MCF 10A (cell line): ENCODE measurements at regions of chrX and their contacts with region 1.

Region 1: GRCh38 chrX:131792789-131793462 is 230.2 kb upstream of the STK26 start:
- DNase-seq: peak; percentile 94
- H3K4me3 Mint-ChIP-seq: peak overlapping the region; percentile 72
- H3K27ac Mint-ChIP-seq: peak overlapping the region; percentile 80
- H3K4me1 Mint-ChIP-seq: peaks cover 4% of the 10 kb centered on the region
- H3K27me3 Mint-ChIP-seq: peaks cover 37% of the 10 kb centered on the region
- CTCF ChIP-seq: peak; percentile 49

Region 2: DNA sequence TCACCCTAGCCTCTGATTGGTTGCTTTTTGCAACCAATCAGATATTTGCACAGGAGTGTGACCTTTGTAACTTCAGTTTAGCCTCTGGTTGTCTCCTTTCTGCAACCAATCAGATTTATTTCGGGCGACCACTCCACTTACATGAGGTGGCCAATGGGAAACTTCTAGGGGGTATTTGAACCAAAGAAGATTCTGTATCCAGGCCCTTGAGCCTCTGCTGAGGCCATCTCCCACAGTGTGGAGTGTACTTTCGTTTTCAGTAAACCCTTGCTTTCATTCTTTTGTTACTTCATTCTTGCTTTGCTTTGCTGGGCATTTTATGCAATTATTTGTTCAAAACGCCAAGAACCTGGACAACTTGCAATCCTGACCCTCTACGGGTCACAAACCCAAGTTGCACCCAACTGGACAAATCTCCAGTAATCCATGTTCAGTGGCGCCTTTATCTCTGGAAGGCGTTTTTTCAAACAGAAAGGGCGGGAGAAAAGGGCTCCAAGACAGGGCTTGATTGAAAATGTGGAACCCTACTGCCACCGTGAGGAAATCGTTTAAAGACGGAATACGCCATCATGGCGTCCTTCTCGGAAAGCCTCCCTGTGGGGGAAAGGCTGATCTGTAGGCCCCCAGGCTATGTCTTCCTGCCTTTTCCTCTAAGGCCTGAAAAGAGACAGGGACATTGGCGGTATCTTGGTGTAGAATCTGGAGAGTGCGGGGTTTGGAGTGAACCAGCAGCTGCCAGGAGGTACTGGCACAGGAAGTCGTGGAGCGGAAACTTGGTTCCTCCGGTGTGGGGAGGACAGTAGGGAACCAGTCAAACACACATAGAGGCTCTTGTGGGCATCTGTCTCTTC is 64.4 kb before region 1 on chrX:
- CTCF ChIA-PET with region 1: interaction called, 3 read pairs
- POLR2A ChIA-PET with region 1: interaction called, 3 read pairs
- intact Hi-C with region 1: loop called (anchors 1 kb)
- DNase-seq: peak; percentile 93
- H3K4me3 Mint-ChIP-seq: peak overlapping the region; percentile 85
- H3K27ac Mint-ChIP-seq: peak overlapping the region; percentile 98
- H3K4me1 Mint-ChIP-seq: no peaks in the 10 kb centered on the region
- H3K27me3 Mint-ChIP-seq: no peaks in the 10 kb centered on the region
- CTCF ChIP-seq: peak; percentile 52

Region 3: DNA sequence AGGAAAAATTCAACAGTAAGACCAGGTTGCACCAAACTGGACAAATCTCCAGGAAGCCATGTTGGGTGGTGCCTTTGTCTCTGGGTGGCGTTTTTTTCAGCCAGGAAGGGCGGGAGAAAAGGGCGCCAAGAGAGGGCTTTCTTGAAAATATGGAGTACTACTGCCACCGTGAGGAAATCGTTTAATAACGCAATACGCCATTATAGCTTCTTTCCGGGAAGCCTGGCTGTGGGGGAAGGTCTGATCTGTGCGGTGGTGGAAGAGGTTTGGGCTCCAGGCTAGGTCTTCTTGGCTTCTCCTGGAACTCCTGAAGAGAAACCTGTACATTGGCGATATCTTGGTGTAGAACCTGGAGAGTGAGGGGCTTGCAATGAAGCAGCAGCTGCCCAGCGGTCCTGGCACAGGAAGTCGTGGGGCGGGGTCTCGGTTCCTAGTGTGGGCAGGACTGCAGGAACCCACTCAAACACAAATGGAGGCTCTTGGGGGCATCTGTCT is 46.4 kb before region 1 on chrX:
- CTCF ChIA-PET with region 1: interaction called, 13 read pairs
- POLR2A ChIA-PET with region 1: interaction called, 7 read pairs
- intact Hi-C with region 1: loop called (anchors 1 kb)
- DNase-seq: peak; percentile 95
- H3K4me3 Mint-ChIP-seq: peak overlapping the region; percentile 93
- H3K27ac Mint-ChIP-seq: peak overlapping the region; percentile 94
- H3K4me1 Mint-ChIP-seq: peaks cover 13% of the 10 kb centered on the region
- H3K27me3 Mint-ChIP-seq: no peaks in the 10 kb centered on the region
- CTCF ChIP-seq: peak; percentile 62

Region 4: GRCh38 chrX:131752489-131753198 is 40.3 kb before region 1 on chrX:
- CTCF ChIA-PET with region 1: interaction called, 13 read pairs
- POLR2A ChIA-PET with region 1: interaction called, 4 read pairs
- intact Hi-C with region 1: loop called (anchors 1 kb)
- DNase-seq: peak; percentile 93
- H3K4me3 Mint-ChIP-seq: peak overlapping the region; percentile 72
- H3K27ac Mint-ChIP-seq: peak overlapping the region; percentile 61
- H3K4me1 Mint-ChIP-seq: peaks cover under 1% of the 10 kb centered on the region
- H3K27me3 Mint-ChIP-seq: no peaks in the 10 kb centered on the region
- CTCF ChIP-seq: no peak